ENCODE measurements at regions of chr5 and their contacts with region 1.

Region 1: DNA sequence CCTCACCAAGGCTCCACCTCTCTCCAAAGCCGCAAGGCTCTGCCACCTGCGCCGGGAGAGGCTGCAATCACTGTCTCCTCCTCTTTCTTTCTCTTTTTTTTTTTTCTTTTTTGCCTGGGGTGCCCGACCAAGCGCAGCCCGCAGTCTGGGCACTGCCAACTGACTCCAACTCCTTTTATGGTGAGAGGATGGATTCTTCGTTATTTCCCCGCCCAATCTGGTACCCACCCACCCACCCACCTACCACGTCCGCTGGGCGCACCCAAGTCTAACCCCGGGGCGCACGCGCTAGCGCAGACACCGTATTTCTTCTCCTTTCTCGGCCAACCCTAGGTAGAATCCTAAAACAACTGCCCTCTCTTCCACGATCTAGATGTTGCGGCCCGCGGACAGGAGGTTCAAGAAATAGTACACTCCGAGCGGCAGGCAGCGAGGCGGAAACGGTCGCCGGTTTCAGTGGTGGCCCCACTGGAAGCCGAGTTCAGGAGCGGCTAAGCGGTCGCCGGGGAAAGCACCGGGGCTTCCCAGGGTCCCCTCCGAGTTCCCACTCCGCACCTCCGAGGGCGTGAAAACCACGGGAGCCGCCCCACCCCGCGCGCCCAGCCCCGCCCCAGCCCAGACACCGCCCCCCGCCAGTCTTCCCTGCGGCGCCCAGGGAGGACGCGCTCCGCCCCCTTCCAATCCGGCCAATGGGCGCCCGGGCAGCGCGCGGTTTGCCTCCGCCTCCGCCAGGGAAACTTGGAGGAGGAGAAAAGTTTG is 381 bp upstream of the PTGER4 start:
- DNase-seq: peak; percentile 97
- ATAC-seq: peak; percentile 59
- H3K4me3 Mint-ChIP-seq: peak overlapping the region; percentile 93
- H3K27ac Mint-ChIP-seq: peak overlapping the region; percentile 97
- H3K4me1 Mint-ChIP-seq: peaks cover 38% of the 10 kb centered on the region
- H3K27me3 Mint-ChIP-seq: no peaks in the 10 kb centered on the region

Region 2: DNA sequence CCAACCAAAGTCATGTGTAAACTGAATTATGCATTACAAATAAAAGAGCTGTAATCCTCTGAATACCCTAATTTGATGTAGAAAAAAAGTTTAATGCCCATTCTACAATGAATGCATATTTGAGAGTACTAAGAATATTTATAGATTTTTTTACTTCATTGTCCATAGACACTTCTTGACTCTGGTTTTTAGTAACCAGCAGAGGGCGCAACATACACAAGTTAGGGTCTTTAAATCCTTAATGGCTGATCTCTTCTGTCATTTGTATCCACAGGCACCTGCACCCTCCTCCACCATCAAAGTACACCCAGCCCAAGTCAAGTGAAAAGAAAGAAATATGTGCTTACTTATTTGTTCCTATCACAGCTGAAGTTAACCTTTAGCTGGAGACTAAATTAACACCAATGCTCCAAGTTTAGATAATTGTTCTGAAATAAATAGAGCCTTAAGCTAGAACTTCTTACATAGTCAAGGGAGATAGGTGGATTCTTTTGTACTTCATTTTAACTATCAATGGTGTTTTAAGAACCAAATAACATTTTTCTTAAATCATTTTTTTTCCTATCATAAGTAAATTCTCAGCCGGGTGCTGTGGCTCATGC is 730.4 kb before region 1 on chr5:
- CTCF ChIA-PET with region 1: interaction called, 16 read pairs
- POLR2A ChIA-PET with region 1: no interaction called
- intact Hi-C with region 1: no loop called
- DNase-seq: peak; percentile 70
- ATAC-seq: peak; percentile 97
- H3K4me3 Mint-ChIP-seq: no peak overlapping the region
- H3K27ac Mint-ChIP-seq: no peak overlapping the region
- H3K4me1 Mint-ChIP-seq: peaks cover 5% of the 10 kb centered on the region
- H3K27me3 Mint-ChIP-seq: no peaks in the 10 kb centered on the region

Region 3: DNA sequence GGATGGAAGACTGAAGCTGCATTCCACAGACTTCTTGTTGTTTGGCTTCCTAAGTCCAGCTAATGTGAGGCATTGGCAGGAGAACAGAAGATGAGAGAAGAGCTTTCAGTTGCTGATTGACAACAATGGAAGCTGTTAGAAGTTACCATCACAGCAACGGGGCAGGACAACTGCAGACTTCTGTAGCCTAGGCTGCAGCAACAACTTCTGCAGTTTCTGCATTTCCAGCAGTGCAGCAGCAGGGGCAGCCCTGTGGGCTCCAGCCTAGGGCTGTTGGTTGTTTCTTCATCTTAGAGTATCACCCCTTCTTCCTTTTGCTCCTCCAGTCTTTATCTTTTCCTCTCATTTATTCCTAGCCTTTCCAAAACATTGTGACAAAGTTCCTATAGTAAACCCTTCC is 528.4 kb before region 1 on chr5:
- CTCF ChIA-PET with region 1: no interaction called
- POLR2A ChIA-PET with region 1: no interaction called
- intact Hi-C with region 1: no loop called
- DNase-seq: no peak
- ATAC-seq: no peak
- H3K4me3 Mint-ChIP-seq: no peak overlapping the region
- H3K27ac Mint-ChIP-seq: no peak overlapping the region
- H3K4me1 Mint-ChIP-seq: no peaks in the 10 kb centered on the region
- H3K27me3 Mint-ChIP-seq: peaks cover 2% of the 10 kb centered on the region

Region 4: DNA sequence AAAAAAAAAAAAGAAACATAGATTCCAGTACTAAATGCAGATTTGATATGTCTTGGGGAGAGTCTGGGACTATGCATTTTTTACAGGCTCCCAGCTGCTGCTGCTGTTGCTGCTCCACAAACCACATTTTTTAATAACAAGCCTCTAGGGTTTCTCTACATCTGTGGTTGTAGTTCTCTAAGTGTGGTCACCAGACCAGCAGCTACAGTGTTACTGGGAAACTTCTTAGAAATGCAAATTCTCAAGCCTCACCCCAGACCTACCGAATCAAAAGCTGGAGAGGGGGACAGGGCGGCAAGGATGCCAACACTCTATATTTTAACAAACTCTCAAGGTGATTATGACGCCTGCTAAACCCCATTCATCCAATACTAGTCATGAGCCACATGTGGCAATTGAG is 293.0 kb before region 1 on chr5:
- CTCF ChIA-PET with region 1: interaction called, 6 read pairs
- POLR2A ChIA-PET with region 1: interaction called, 3 read pairs
- intact Hi-C with region 1: loop called (anchors 1 to 2 kb)
- DNase-seq: peak; percentile 39
- ATAC-seq: peak; percentile 11
- H3K4me3 Mint-ChIP-seq: no peak overlapping the region
- H3K27ac Mint-ChIP-seq: peak overlapping the region; percentile 92
- H3K4me1 Mint-ChIP-seq: peaks cover 86% of the 10 kb centered on the region
- H3K27me3 Mint-ChIP-seq: no peaks in the 10 kb centered on the region

Region 5: GRCh38 chr5:40410231-40410861 is 269.0 kb before region 1 on chr5:
- CTCF ChIA-PET with region 1: interaction called, 5 read pairs
- POLR2A ChIA-PET with region 1: interaction called, 8 read pairs
- intact Hi-C with region 1: loop called (anchors 1 kb)
- DNase-seq: peak; percentile 80
- ATAC-seq: peak; percentile 82
- H3K4me3 Mint-ChIP-seq: peak overlapping the region; percentile 58
- H3K27ac Mint-ChIP-seq: peak overlapping the region; percentile 94
- H3K4me1 Mint-ChIP-seq: peaks cover 67% of the 10 kb centered on the region
- H3K27me3 Mint-ChIP-seq: no peaks in the 10 kb centered on the region

Region 6: GRCh38 chr5:40578501-40579451 is 100.6 kb before region 1 on chr5:
- CTCF ChIA-PET with region 1: interaction called, 3 read pairs
- POLR2A ChIA-PET with region 1: interaction called, 3 read pairs
- intact Hi-C with region 1: loop called (anchors 1 kb)
- DNase-seq: peak; percentile 84
- ATAC-seq: peak; percentile 95
- H3K4me3 Mint-ChIP-seq: peak overlapping the region; percentile 49
- H3K27ac Mint-ChIP-seq: peak overlapping the region; percentile 72
- H3K4me1 Mint-ChIP-seq: peaks cover 44% of the 10 kb centered on the region
- H3K27me3 Mint-ChIP-seq: no peaks in the 10 kb centered on the region

Region 7: DNA sequence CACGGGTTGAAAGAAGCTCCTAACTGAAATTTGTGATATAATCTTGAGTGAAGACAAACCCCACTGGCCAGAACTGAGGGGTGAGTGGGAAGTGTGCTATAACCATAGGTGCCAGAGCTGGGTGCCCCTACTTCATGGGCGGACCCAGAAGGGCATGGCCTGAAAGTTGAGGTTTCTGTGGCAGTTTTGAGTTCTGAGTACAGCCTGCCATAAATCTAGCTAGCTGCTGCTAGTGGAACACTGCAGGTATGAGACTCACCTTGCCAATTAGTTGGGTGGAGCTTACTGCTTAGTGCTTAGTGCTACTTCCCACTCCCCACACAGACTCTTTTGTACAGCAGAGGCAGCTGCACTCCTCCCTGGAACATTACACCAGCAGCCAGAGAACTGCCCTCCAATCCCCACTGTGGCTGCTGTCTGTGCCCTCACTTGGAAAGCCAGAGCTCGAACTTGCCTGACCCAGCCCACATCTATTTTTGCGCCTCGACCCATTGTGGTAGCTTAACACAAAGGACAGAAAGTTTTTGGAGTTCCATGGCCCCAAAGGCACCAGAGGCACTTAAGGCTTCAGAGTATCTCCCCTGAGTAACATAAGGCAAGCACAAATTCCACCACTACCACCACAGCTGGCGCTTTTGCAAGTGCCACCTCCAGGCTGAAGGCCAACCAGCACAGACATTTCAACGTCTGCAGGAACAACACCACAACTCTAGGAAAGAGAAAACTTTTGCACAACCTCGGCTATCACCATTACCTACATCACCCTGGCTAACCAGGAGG is 26.7 kb before region 1 on chr5:
- CTCF ChIA-PET with region 1: interaction called, 3 read pairs
- POLR2A ChIA-PET with region 1: interaction called, 3 read pairs
- intact Hi-C with region 1: loop called (anchors 2 kb)
- DNase-seq: peak; percentile 49
- ATAC-seq: peak; percentile 33
- H3K4me3 Mint-ChIP-seq: peak overlapping the region; percentile 71
- H3K27ac Mint-ChIP-seq: peak overlapping the region; percentile 91
- H3K4me1 Mint-ChIP-seq: peaks cover 63% of the 10 kb centered on the region
- H3K27me3 Mint-ChIP-seq: no peaks in the 10 kb centered on the region

Measured in activated CD4-positive, alpha-beta T cell treated with anti-CD3 and anti-CD28 coated beads for 36 hours (primary cell).